ENCODE measurements at regions of chr2 and their contacts with region 1.

Region 1: DNA sequence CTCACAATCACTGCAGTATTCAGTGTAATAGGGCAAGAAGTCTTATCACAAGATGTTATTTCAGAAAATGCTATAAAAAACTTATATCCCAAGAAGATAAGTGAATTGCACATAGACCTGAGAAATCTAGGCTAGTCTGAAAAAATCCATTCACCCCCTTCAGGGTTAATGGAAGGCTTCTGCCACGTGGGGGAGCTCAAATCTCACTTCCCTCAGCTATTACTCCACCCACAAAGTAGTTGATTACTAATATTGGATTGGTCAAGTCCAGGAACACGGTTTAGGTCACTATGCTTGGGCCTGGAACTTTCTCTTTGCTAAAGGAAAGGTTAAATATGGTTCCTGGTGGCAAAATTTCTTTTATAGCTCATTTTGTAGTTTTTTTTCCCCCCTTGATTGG is 51.2 kb upstream of the ADAM23 start:
- DNase-seq: no peak
- ATAC-seq: peak in 3 of 8 donors; percentile 29 to 70 (median 39)
- H3K4me3 ChIP-seq: no peak overlapping the region
- H3K27ac ChIP-seq: no peak overlapping the region
- H3K4me1 ChIP-seq: no peaks in the 10 kb centered on the region
- H3K27me3 ChIP-seq: no peaks in the 10 kb centered on the region
- CTCF ChIP-seq: peak; percentile 25 to 61 (median 52)

Region 2: DNA sequence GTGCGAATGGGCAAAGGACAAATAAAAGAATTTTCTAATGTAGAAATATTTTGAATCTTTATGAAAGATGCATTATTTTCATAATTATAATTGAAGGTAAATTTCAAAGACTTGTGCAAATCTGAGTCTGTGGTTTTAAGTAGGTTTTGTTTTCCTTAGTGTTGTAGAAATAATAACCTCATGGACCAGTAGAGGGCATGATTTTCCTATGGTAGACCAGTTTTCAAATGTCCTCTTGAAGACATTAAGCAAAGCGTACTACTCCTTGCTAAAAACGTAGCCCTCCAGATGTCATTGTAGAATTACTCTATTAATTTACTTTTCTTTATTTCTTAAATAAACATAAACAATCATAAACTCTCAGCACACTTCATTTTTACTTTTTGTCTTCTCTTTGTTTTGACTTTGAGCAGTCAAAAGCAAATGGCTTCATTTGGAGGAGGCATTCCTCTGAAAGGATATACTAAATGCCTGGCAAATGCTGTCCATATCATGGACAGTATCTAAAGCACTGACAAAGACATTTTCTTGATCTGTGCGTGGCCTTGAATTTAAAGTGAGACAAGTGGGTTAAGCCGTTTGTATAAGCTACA is 164.3 kb after region 1 on chr2:
- intact Hi-C with region 1: loop called in 4 of 10 experiments (anchors 2 to 10 kb)
- DNase-seq: no peak
- ATAC-seq: no peak
- H3K4me3 ChIP-seq: no peak overlapping the region
- H3K27ac ChIP-seq: no peak overlapping the region
- H3K4me1 ChIP-seq: peaks cover 0 to 5% (median 0%) of the 10 kb centered on the region in 9 donors
- H3K27me3 ChIP-seq: no peaks in the 10 kb centered on the region
- CTCF ChIP-seq: peak; percentile 13 to 67 (median 53)

Measured in heart right ventricle (tissue), 16 donors.